Uterus (tissue), 4 donors: ENCODE measurements at regions of chr1 and their contacts with region 1.

Region 1: GRCh38 chr1:153677718-153678505 is 576 bp upstream of the NPR1 start:
- DNase-seq: peak; percentile 60 to 67
- H3K4me3 ChIP-seq: peak overlapping the region; percentile 47 to 69
- H3K27ac ChIP-seq: peak overlapping the region; percentile 74 to 83
- H3K4me1 ChIP-seq: no peaks in the 10 kb centered on the region
- H3K27me3 ChIP-seq: no peaks in the 10 kb centered on the region
- CTCF ChIP-seq: peak; percentile 84 to 96 (median 86)
- POLR2A ChIP-seq: no peak

Region 2: DNA sequence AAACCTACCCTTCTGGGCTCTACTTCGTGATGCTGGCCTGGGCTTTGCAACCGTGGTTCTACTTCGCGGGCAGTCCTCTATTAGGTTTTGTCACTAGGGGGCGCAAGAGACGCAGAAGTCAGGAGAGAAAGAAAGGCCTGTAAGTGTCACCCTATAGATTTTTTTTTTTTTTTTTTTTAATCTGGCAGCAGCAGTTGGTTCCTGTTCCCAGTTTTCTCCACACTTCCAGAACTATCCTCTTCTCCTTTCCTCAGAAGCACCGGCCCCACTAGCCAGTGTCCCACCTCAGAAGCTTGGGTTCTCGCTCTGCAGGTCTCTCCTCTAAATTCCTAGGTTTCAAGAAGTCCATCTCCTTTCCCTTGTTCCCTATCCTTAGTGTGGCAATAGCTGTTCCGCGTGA is 1023.8 kb before region 1 on chr1:
- intact Hi-C with region 1: no loop called
- DNase-seq: no peak
- H3K4me3 ChIP-seq: no peak overlapping the region
- H3K27ac ChIP-seq: no peak overlapping the region
- H3K4me1 ChIP-seq: no peaks in the 10 kb centered on the region
- H3K27me3 ChIP-seq: no peaks in the 10 kb centered on the region
- CTCF ChIP-seq: peak in 1 of 4 experiments; percentile 10
- POLR2A ChIP-seq: no peak

Region 3: GRCh38 chr1:153749408-153750005 is 71.6 kb after region 1 on chr1:
- intact Hi-C with region 1: loop called (anchors 5 kb)
- DNase-seq: peak; percentile 88 to 90
- H3K4me3 ChIP-seq: no peak overlapping the region
- H3K27ac ChIP-seq: peak overlapping the region; percentile 84 to 89
- H3K4me1 ChIP-seq: peaks cover 6 to 17% of the 10 kb centered on the region in 2 donors
- H3K27me3 ChIP-seq: no peaks in the 10 kb centered on the region
- CTCF ChIP-seq: peak; percentile 87 to 94 (median 92)
- POLR2A ChIP-seq: peak in 1 of 2 donors; percentile 13

Region 4: GRCh38 chr1:153771841-153772593 is 94.1 kb after region 1 on chr1:
- intact Hi-C with region 1: loop called (anchors 2 kb)
- DNase-seq: peak; percentile 61 to 65
- H3K4me3 ChIP-seq: no peak overlapping the region
- H3K27ac ChIP-seq: peak overlapping the region; percentile 32 to 52
- H3K4me1 ChIP-seq: peaks cover 0 to 8% of the 10 kb centered on the region in 2 donors
- H3K27me3 ChIP-seq: no peaks in the 10 kb centered on the region
- CTCF ChIP-seq: peak; percentile 51 to 79 (median 66)
- POLR2A ChIP-seq: no peak